ENCODE measurements at regions of chr12 and their contacts with region 1.

Region 1: GRCh38 chr12:89080793-89081465 is 271.4 kb downstream of the DUSP6 start:
- DNase-seq: no peak
- ATAC-seq: peak in 4 of 8 donors; percentile 40 to 70 (median 61)
- H3K4me3 ChIP-seq: no peak overlapping the region
- H3K27ac ChIP-seq: peak overlapping the region in 3 of 10 donors; percentile 7 to 49 (median 37)
- H3K4me1 ChIP-seq: peaks cover 0 to 47% (median 35%) of the 10 kb centered on the region in 9 donors
- H3K27me3 ChIP-seq: no peaks in the 10 kb centered on the region
- CTCF ChIP-seq: no peak

Region 2: DNA sequence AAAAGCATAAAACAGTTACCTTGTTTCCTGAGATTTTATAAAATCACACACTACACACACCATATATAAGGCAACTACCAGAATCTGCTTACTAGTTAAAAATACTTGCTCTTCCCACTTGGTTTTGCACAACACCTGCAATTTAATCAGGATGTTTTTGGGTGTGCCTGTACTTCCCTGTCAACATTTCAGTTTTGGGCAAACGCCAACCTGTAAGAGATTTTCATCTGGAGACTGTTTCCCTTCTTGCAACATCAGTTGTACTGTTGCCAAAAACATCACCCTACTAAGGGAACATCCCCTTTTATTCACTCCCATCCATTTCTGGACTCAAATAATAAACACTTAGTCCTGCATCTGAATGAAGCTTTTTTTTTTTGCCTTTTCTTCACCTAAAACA is 99.1 kb after region 1 on chr12:
- intact Hi-C with region 1: loop called in 2 of 10 experiments (anchors 5 to 10 kb)
- DNase-seq: peak in 1 of 2 donors; percentile 74
- ATAC-seq: peak; percentile 67 to 95 (median 86)
- H3K4me3 ChIP-seq: no peak overlapping the region
- H3K27ac ChIP-seq: peak overlapping the region in 4 of 10 donors; percentile 10 to 36 (median 22)
- H3K4me1 ChIP-seq: peaks cover 0 to 40% (median 22%) of the 10 kb centered on the region in 9 donors
- H3K27me3 ChIP-seq: no peaks in the 10 kb centered on the region
- CTCF ChIP-seq: no peak

Measured in heart right ventricle (tissue), 16 donors.